CD14-positive monocyte (primary cell): ENCODE measurements at regions of chr20 and their contacts with region 1.

Region 1: DNA sequence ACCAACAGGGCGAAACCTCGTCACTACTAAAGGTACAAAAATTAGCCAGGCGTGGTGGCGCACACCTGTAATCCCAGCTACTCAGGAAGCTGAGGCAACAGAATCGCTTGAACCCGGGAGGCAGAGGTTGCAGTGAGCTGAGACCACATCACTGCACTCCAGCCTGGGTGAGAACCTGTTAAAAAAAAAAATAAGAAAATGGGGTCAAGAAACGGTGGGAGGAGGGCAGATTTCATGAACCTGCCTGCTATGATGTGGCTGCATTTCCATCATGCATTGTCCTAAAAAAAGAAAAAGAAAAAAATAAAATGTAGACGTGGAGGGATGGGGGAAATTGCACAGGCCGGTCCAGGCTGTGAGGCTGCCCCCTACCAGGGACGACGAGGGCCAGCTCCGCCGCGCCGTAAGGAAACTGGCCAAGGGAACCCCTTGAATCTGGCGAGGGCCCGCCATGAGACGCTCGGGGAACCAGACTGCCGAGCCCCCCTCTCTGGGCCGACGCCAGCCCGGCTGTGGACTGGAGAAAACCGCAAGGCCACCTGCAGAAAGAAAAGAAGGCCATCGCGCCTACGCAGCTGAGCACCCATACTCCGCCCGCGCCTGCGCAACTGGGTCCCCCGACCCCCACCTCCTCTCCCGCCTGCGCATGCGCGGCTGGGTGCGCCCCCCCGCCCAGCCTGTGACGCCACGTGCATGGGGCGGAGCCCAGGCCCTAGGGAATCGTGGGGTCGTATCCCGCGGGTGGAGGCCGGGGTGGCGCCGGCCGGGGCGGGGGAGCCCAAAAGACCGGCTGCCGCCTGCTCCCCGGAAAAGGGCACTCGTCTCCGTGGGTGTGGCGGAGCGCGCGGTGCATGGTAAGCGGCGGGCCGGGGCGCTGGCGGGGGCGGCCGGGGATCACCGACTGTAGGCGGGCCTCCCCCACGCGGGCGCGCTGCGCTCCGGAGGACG is at the start of gene ENTPD6:
- DNase-seq: peak; percentile 79 to 83 (median 81)
- H3K4me3 ChIP-seq: peak within 1 kb of the TSS; percentile 88 to 98 (median 96)
- H3K4me3 Mint-ChIP-seq: peak within 1 kb of the TSS; percentile 90 to 97
- H3K27ac ChIP-seq: peak within 1 kb of the TSS; percentile 61 to 87
- H3K27ac Mint-ChIP-seq: peak within 1 kb of the TSS; percentile 66 to 89 (median 81)
- H3K4me1 ChIP-seq: peaks cover 18 to 29% of the 10 kb centered on the region in 2 donors
- H3K4me1 Mint-ChIP-seq: peaks cover 34% of the 10 kb centered on the region
- H3K27me3 ChIP-seq: no peaks in the 10 kb centered on the region
- H3K27me3 Mint-ChIP-seq: peaks cover 3 to 13% (median 8%) of the 10 kb centered on the region in 3 donors
- CTCF ChIP-seq: no peak
- polyA plus RNA-seq, gene ENTPD6: 36.2 to 120 (median 47.0) TPM

Region 2: DNA sequence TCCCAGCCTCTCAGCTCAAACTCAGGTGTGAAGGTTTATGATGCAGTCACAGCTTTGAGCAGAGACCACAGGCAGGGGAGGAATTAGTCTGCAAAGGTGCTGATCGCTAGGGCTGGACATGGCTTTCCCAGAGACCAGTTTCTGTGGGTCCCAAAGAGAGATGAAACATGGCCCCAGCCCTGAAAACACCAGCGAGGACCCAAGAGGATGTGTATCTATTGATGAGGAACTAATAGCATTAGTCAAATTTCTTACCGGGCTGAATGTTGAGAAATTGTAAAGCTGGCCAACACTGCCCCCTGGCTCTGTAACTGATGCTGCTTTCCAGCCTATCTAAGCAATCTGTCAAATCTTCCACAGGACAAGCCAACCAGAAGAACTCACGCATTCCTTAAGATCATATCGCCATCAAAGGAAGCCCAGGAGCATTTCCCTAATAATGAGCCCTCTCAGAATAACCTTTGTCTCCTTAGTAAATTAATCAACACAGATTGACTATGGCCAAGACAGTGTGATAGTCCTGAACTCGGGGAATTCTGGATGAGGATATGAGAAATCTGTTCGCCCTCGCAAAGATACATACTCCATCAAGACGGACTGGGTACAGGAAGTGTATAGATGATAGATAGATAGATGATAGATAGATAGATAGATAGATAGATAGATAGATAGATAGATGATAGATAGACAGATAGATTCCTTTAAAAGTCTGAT is 129.5 kb before region 1 on chr20:
- intact Hi-C with region 1: loop called in 1 of 2 experiments (anchors 10 kb)
- DNase-seq: peak; percentile 59 to 76 (median 67)
- H3K4me3 ChIP-seq: no peak overlapping the region
- H3K4me3 Mint-ChIP-seq: no peak overlapping the region
- H3K27ac ChIP-seq: no peak overlapping the region
- H3K27ac Mint-ChIP-seq: no peak overlapping the region
- H3K4me1 ChIP-seq: no peaks in the 10 kb centered on the region
- H3K4me1 Mint-ChIP-seq: peaks cover 4% of the 10 kb centered on the region
- H3K27me3 ChIP-seq: peaks cover 4 to 15% of the 10 kb centered on the region in 2 donors
- H3K27me3 Mint-ChIP-seq: peaks cover 12 to 15% (median 13%) of the 10 kb centered on the region in 3 donors
- CTCF ChIP-seq: peak; percentile 82

Region 3: DNA sequence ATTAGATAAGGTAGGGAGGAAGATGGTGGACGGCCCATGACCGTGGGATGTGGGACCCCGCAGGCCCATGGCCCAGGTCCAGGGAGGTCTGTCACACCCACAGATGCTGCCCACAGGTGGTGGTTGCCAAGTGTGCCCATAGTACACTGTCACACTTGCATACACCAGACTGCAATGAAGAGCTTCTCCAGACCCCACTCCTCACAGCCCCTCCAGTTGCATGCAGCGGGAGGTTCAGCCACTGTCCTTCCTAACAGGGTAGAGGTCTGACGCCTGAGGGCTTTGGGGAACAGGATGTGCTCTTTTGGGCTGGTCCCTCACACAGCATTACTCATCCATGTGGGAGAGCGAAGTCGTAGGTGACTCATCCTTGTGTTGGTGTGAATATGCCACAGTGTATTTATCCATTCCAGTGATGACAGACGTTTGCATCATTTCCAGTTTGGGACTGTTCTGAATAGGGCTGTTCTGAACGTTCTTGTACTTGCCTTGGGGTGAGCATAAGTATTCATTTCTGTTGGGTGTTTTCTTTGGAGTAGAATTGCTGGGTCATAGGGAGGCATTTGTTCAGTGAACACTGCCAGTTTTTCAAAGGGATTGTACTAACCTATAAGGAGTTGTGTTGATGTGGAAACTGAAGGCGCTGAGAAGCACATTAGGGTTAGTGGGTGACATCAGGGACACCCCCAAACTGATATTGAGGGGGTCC is 42.5 kb after region 1 on chr20:
- intact Hi-C with region 1: loop called in 1 of 2 experiments (anchors 5 kb)
- DNase-seq: peak; percentile 93 to 98 (median 97)
- H3K4me3 ChIP-seq: peak overlapping the region in 1 of 3 experiments; percentile 9
- H3K4me3 Mint-ChIP-seq: peak overlapping the region in 1 of 2 donors; percentile 50
- H3K27ac ChIP-seq: peak overlapping the region in 1 of 2 donors; percentile 80
- H3K27ac Mint-ChIP-seq: peak overlapping the region; percentile 79 to 93 (median 88)
- H3K4me1 ChIP-seq: peaks cover 12 to 18% of the 10 kb centered on the region in 2 donors
- H3K4me1 Mint-ChIP-seq: peaks cover 25% of the 10 kb centered on the region
- H3K27me3 ChIP-seq: no peaks in the 10 kb centered on the region
- H3K27me3 Mint-ChIP-seq: peaks cover 3 to 15% (median 15%) of the 10 kb centered on the region in 3 donors
- CTCF ChIP-seq: no peak

Region 4: DNA sequence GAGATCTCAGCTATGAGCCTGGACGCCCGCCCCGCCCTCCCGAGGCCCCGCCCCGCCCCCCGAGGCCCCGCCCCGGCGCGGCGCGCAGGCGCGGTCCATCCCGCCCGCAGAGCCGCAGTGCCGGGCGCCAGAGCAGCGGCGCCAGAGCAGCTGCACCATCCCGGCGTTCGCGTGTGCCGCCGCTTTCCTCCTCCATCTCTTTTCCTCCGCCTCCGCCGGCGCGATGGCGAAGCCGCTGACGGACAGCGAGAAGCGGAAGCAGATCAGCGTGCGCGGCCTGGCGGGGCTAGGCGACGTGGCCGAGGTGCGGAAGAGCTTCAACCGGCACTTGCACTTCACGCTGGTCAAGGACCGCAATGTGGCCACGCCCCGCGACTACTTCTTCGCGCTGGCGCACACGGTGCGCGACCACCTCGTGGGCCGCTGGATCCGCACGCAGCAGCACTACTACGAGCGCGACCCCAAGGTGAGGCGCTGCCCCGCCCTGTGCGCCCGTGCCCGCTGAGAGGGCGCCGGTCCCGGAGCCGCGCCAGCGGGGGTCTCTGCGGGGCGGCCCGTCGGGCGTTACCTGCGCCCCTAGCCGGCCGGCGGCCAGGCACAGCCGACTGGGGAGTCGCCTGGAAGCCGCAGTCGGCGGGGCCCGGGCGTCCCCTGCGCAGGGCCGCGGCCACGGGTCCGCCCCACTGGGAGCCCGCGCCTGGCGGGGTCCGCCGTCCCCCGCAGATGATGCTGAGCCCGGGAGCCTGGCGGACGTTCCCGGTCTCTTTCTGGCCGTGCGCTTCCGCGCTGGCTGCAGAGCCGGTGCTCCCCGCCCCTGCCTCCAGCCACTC is 52.9 kb after region 1 on chr20 and contains the start of gene PYGB:
- intact Hi-C with region 1: loop called in 1 of 2 experiments (anchors 5 kb)
- DNase-seq: peak; percentile 84 to 85 (median 84)
- H3K4me3 ChIP-seq: peak within 1 kb of the TSS; percentile 55 to 86 (median 80)
- H3K4me3 Mint-ChIP-seq: peak within 1 kb of the TSS; percentile 95 to 96
- H3K27ac ChIP-seq: peak within 1 kb of the TSS; percentile 78 to 89
- H3K27ac Mint-ChIP-seq: peak within 1 kb of the TSS; percentile 89 to 96 (median 94)
- H3K4me1 ChIP-seq: peaks cover 20 to 24% of the 10 kb centered on the region in 2 donors
- H3K4me1 Mint-ChIP-seq: peaks cover 43% of the 10 kb centered on the region
- H3K27me3 ChIP-seq: peaks cover 0 to 2% of the 10 kb centered on the region in 2 donors
- H3K27me3 Mint-ChIP-seq: peaks cover 10 to 16% (median 12%) of the 10 kb centered on the region in 3 donors
- CTCF ChIP-seq: no peak
- polyA plus RNA-seq, gene PYGB: 26.6 to 33.2 (median 26.7) TPM